Sigmoid colon (tissue), 7 donors: ENCODE measurements at regions of chr4 and their contacts with region 1.

Region 1: GRCh38 chr4:55546756-55547465 is at the start of gene CLOCK:
- DNase-seq: peak; percentile 92
- H3K4me3 ChIP-seq: peak within 1 kb of the TSS; percentile 61 to 98 (median 86)
- H3K27ac ChIP-seq: peak within 1 kb of the TSS; percentile 91 to 99 (median 98)
- H3K4me1 ChIP-seq: peaks cover 3 to 24% (median 10%) of the 10 kb centered on the region in 4 donors
- H3K27me3 ChIP-seq: no peaks in the 10 kb centered on the region
- CTCF ChIP-seq: peak; percentile 22 to 58 (median 46)
- EP300 ChIP-seq: no peak
- POLR2A ChIP-seq: peak; percentile 51 to 63
- total RNA-seq, gene CLOCK: 22.5 to 27.5 (median 24.0) TPM

Region 2: GRCh38 chr4:54731552-54731951 is 815.4 kb before region 1 on chr4:
- intact Hi-C with region 1: no loop called
- DNase-seq: no peak
- H3K4me3 ChIP-seq: no peak overlapping the region
- H3K27ac ChIP-seq: no peak overlapping the region
- H3K4me1 ChIP-seq: no peaks in the 10 kb centered on the region
- H3K27me3 ChIP-seq: no peaks in the 10 kb centered on the region
- CTCF ChIP-seq: no peak
- EP300 ChIP-seq: no peak
- POLR2A ChIP-seq: no peak

Region 3: DNA sequence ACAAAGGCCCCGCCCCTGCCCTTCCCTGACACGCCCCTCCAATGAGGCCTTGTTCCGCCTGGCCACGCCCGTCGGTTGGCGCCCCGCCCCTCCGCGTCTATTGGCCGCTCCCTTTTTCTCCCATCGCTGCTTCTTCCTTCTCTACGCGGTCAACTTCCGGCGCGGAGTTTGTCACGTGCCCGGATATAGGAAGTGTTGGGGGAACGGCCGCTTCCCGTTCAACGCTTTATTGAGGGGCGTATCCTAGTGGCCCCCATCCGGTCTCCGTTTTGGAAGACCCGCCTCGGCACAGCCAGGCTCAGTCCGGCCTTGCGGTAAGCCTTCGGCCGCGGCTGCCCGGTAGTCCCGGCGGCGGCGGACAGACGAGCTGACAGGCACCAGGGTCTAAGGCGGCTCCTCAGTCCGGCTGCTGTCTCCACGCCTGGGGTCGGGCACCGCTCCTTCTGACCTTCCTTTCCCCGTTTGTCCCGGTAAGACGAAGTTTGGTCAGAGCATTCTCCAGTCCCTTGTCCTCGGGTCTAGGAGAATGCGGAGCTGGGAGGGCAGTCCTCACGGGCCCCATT is 306.7 kb after region 1 on chr4 and contains the start of gene EXOC1:
- intact Hi-C with region 1: loop called (anchors 5 kb)
- DNase-seq: peak; percentile 99
- H3K4me3 ChIP-seq: peak within 1 kb of the TSS; percentile 73 to 93 (median 86)
- H3K27ac ChIP-seq: peak within 1 kb of the TSS; percentile 85 to 88 (median 88)
- H3K4me1 ChIP-seq: peaks cover 0 to 21% (median 17%) of the 10 kb centered on the region in 4 donors
- H3K27me3 ChIP-seq: no peaks in the 10 kb centered on the region
- CTCF ChIP-seq: no peak
- EP300 ChIP-seq: peak in 1 of 4 donors; percentile 38
- POLR2A ChIP-seq: peak in 1 of 2 donors; percentile 32
- total RNA-seq, gene EXOC1: 14.5 to 49.0 (median 21.7) TPM